HEK293 (cell line): ENCODE measurements at regions of chr11 and their contacts with region 1.

Region 1: GRCh38 chr11:66069715-66070603 is at the start of gene PACS1:
- H3K4me3 ChIP-seq: peak within 1 kb of the TSS; percentile 76
- H3K27ac ChIP-seq: peak within 1 kb of the TSS; percentile 81
- H3K4me1 ChIP-seq: no peaks in the 10 kb centered on the region; the same call in none of the 2 replicates
- CTCF ChIP-seq: 0 out of 2 replicates have a peak, but pooled peaks have one; percentile 11

Region 2: DNA sequence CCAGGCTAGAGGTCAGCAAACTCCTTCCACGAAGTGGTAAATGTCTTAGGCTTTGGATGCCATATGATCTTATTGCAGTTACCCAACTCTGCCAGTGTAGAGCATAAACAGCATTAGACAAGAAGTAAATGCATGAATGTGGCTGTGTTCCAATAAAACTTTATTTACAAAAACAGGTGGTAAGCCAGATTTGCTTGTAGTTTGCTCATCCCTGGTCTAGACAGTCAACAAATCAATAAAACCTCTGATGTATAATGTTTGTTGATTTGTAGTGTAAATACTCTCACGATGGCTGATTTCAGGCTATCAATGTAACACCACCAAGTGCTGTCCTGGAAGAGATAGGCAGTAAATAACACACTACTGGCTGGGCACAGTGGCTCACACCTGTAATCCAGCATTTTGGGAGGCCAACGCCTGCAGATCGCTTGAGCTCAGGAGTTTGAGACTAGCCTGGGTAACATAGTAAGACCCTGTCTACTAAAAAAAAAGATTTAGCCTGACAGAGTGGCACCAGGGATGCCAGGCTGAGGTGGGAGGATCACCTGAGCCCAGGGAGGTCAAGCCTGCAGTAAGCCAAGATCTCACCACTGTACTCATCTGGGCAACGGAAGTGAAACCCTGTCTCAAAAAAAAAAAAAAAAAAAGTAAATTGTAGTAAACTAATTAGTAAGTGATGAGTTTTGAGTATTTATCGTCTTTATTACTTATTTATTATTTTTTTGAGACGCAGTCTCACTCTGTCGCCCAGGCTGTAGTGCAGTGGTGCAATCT is 36.8 kb before region 1 on chr11:
- CTCF ChIA-PET with region 1: no interaction called
- POLR2A ChIA-PET with region 1: no interaction called
- H3K4me3 ChIP-seq: no peak overlapping the region
- H3K27ac ChIP-seq: no peak overlapping the region
- H3K4me1 ChIP-seq: no peaks in the 10 kb centered on the region
- CTCF ChIP-seq: no peak

Region 3: GRCh38 chr11:66045177-66045639 is 24.8 kb before region 1 on chr11:
- CTCF ChIA-PET with region 1: interaction called, 36 read pairs
- POLR2A ChIA-PET with region 1: interaction called, 3 read pairs
- H3K4me3 ChIP-seq: no peak overlapping the region
- H3K27ac ChIP-seq: no peak overlapping the region
- H3K4me1 ChIP-seq: no peaks in the 10 kb centered on the region
- CTCF ChIP-seq: peak; percentile 78

Region 4: GRCh38 chr11:66080055-66080817 is 10.3 kb after region 1 on chr11:
- CTCF ChIA-PET with region 1: interaction called, 22 read pairs
- POLR2A ChIA-PET with region 1: interaction called, 3 read pairs
- H3K4me3 ChIP-seq: no peak overlapping the region
- H3K27ac ChIP-seq: no peak overlapping the region
- H3K4me1 ChIP-seq: peaks cover 17% of the 10 kb centered on the region
- CTCF ChIP-seq: no peak

Region 5: GRCh38 chr11:66119348-66120133 is 49.6 kb after region 1 on chr11:
- CTCF ChIA-PET with region 1: interaction called, 21 read pairs
- POLR2A ChIA-PET with region 1: interaction called, 5 read pairs
- H3K4me3 ChIP-seq: no peak overlapping the region
- H3K27ac ChIP-seq: no peak overlapping the region
- H3K4me1 ChIP-seq: peaks cover 12% of the 10 kb centered on the region; the same call in 1 of the 2 replicates
- CTCF ChIP-seq: no peak